HEK293T (cell line): ENCODE measurements at regions of chr4 and their contacts with region 1.

Region 1: GRCh38 chr4:184168406-184169019 is 49.2 kb downstream of the ENPP6 start:
- DNase-seq: peak; percentile 70

Region 2: DNA sequence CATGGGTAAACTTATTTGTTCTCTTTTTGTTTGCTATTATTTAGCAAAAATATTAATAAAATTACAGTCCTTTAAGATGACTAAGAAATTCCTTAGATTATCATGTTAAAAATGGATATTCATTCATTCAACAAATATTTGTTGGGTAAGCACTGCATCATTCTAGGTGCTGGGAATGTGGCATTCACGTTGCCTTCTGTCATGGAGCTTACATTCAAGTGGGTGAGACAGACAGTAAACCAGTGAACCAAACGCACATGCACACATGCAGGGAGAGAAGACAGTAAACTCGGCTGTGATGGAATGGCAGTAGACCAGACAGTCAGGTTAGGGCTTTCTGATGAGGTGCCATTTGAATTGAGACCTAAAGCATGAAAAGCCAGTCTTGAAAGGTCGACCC is 171.6 kb before region 1 on chr4:
- CTCF ChIA-PET with region 1: no interaction called
- POLR2A ChIA-PET with region 1: no interaction called
- DNase-seq: no peak

Region 3: GRCh38 chr4:184100297-184100885 is 68.1 kb before region 1 on chr4:
- CTCF ChIA-PET with region 1: interaction called, 11 read pairs
- POLR2A ChIA-PET with region 1: no interaction called
- DNase-seq: peak; percentile 64

Region 4: GRCh38 chr4:184193556-184194525 is 25.3 kb after region 1 on chr4:
- CTCF ChIA-PET with region 1: no interaction called
- POLR2A ChIA-PET with region 1: no interaction called
- DNase-seq: no peak